BJ (cell line): ENCODE measurements at regions of chr17 and their contacts with region 1.

Region 1: GRCh38 chr17:57982452-57983170 is 5.4 kb downstream of the VEZF1 start:
- DNase-seq: no peak
- H3K4me3 ChIP-seq: no peak overlapping the region
- H3K27me3 ChIP-seq: no peaks in the 10 kb centered on the region
- CTCF ChIP-seq: no peak

Region 2: DNA sequence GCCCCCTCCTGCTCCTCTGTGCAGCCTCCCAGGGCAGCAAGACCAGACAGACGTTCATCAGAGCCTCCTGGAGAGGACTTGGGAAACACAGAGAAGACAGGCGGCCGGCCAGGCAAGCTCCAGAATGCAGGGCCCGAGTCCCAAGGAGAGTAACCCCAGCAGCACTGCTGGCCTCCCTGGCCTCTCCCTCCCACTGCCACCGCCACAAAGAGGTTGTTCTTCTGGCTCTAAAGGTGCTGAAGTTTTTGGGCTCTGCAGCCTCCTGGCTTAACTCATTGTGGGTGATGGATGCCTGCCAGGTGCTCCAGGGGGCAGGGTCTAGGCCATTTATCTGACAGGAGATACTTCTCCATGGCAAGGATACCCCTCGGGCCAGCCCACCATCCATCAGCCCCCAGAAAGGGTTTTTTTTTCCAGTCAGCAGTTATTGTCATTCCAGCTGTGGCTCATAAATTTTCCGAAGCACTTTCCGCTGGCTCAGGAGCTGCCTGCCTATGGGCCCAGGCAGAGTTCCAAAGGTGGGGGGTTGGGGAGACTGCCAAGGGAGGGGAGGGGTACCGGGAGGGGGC is 100.7 kb before region 1 on chr17:
- CTCF ChIA-PET with region 1: interaction called, 20 read pairs
- POLR2A ChIA-PET with region 1: interaction called, 14 read pairs
- DNase-seq: no peak
- H3K4me3 ChIP-seq: no peak overlapping the region
- H3K27me3 ChIP-seq: no peaks in the 10 kb centered on the region
- CTCF ChIP-seq: no peak

Region 3: DNA sequence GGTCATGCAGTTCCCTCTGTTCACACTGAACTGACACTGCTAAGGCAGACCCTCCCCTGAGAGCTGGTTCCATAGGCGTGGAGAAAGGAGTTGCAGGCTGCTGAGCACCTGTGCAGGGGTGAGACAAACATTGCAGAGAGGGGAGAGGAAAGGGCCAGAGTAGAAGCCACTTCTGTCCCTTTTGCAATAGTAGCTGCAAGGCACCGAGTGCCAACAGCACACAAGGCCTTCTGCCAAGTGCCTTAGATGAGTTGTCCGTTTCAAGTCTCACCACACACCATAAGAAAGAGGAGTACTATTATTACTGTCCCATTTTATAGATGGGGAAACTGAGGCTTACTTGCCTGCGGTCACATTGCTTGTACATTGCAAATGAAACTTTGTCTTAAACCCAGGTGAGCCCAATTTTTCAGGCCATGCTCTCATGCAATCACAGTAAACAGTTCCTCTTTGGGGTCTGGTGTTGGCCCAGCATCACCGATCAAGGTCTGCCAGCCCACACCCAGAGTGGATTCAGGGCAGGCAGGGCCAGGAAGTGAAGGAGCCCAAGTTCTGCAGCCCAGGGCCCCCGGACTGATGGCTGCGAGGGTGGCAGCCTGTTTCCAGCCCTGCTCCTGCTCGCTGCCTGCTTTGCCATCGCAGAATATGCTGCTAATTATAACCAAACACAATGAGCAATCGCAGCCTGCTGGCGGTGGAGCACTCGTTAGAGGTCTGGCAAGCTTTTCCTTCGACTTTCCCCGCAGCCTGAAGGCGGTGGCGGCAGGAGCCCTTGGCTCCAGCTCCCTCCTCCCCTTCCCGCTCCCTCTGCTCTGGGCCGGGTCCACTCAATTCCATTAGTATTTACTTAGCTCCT is 63.9 kb after region 1 on chr17:
- CTCF ChIA-PET with region 1: no interaction called
- POLR2A ChIA-PET with region 1: no interaction called
- DNase-seq: no peak
- H3K4me3 ChIP-seq: no peak overlapping the region
- H3K27me3 ChIP-seq: peaks cover 13% of the 10 kb centered on the region; the same call in 1 of the 2 replicates
- CTCF ChIP-seq: no peak